Panc1 (cell line): ENCODE measurements at regions of chr11 and their contacts with region 1.

Region 1: GRCh38 chr11:96161307-96162089 is 181.5 kb downstream of the MAML2 start:
- DNase-seq: no peak
- ATAC-seq: no peak
- H3K4me3 ChIP-seq: no peak overlapping the region
- H3K27ac ChIP-seq: no peak overlapping the region
- H3K4me1 ChIP-seq: peaks cover 3% of the 10 kb centered on the region; the same call in 1 of the 2 replicates
- H3K27me3 ChIP-seq: no peaks in the 10 kb centered on the region
- CTCF ChIP-seq: no peak

Region 2: DNA sequence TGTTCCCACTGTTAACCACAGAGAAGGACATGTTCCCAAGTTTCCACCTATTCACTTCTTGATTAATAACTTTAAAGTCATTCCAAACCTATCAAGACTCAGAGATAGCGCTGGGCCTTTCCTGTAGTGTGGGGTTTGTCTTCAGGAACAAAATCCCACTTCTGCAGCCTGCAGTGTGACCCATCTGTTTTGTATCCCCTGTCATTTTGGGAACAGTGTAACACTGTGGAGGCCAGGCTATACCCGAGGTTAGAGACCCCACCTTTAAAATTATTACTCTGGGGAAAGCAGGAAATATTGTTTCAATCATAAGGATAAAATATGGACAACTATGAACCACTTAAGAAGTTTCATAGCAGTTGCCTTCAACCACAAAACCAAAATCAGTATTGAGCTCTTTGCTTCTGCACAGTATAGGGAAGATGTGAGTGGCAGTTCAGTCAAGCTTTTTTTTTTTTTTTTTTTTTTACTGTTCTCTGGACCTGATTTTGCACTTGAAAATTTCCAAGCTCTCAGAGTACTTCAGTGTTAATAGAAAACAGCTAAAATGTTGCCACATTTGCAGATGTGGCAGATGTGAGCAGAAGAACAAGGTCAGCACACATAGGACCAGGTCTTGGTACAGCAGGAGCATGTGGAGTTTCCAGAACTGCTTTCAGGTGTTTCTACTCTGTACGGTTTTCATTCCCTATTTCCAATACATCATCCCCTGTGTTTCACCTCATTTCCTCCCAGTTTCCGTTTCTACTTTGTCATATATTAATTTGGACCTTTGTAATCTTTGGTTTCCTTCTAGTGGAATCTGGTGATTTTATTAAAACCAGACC is 60.0 kb after region 1 on chr11:
- CTCF ChIA-PET with region 1: no interaction called
- POLR2A ChIA-PET with region 1: interaction called, 11 read pairs
- in situ Hi-C with region 1: no loop called
- intact Hi-C with region 1: no loop called
- DNase-seq: no peak
- ATAC-seq: peak; percentile 58; the same call in 1 of the 2 replicates
- H3K4me3 ChIP-seq: no peak overlapping the region
- H3K27ac ChIP-seq: no peak overlapping the region
- H3K4me1 ChIP-seq: no peaks in the 10 kb centered on the region
- H3K27me3 ChIP-seq: no peaks in the 10 kb centered on the region
- CTCF ChIP-seq: no peak

Region 3: DNA sequence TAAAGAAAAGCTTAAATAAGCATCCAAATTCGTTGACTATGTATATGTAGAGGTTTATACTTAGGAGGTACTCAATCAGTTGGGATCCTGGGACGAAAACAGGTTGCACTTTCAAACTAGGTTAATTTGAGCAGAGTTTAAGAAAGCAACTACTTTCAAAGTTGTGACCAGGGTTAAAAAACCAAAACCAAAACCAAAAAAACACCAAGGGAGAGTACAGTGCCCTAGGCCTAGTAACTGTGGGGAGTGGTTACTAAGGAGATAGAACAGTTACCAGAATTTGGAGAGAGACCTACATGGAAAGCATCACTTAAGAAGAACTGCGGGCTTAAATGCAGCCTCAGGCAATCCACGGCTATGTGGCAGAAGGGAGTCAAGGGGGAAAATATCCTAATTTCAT is 376.6 kb after region 1 on chr11:
- CTCF ChIA-PET with region 1: no interaction called
- POLR2A ChIA-PET with region 1: no interaction called
- in situ Hi-C with region 1: no loop called
- intact Hi-C with region 1: no loop called
- DNase-seq: no peak
- ATAC-seq: no peak
- H3K4me3 ChIP-seq: no peak overlapping the region
- H3K27ac ChIP-seq: no peak overlapping the region
- H3K4me1 ChIP-seq: no peaks in the 10 kb centered on the region
- H3K27me3 ChIP-seq: no peaks in the 10 kb centered on the region
- CTCF ChIP-seq: no peak